K562 (cell line): ENCODE measurements at regions of chr5 and their contacts with region 1.

Region 1: GRCh38 chr5:140647042-140647341 is 438 bp downstream of the NDUFA2 start:
- DNase-seq: no peak
- ATAC-seq: peak; percentile 52
- H3K4me3 ChIP-seq: peak overlapping the region; percentile 96
- H3K27ac ChIP-seq: peak overlapping the region; percentile 95
- H3K4me1 ChIP-seq: peaks cover 4 to 10% of the 10 kb centered on the region in 2 experiments; a peak in 3 of 5 replicates
- H3K27me3 ChIP-seq: no peaks in the 10 kb centered on the region; a peak in 1 of 5 replicates
- CTCF ChIP-seq: no peak
- EP300 ChIP-seq: no peak
- POLR2A ChIP-seq: no peak
- RAD21 ChIP-seq: no peak

Region 2: GRCh38 chr5:140547508-140548299 is 99.3 kb before region 1 on chr5 and contains the start of gene EIF4EBP3:
- CTCF ChIA-PET with region 1: no interaction called
- POLR2A ChIA-PET with region 1: interaction called, 14 read pairs
- in situ Hi-C with region 1: no loop called
- intact Hi-C with region 1: no loop called
- DNase-seq: peak; percentile 86 to 95 (median 90)
- ATAC-seq: peak; percentile 94
- H3K4me3 ChIP-seq: peak within 1 kb of the TSS; percentile 3; the same call in 1 of the 2 replicates
- H3K27ac ChIP-seq: peak within 1 kb of the TSS; percentile 61
- H3K4me1 ChIP-seq: peaks cover 34 to 35% of the 10 kb centered on the region in 2 experiments
- H3K27me3 ChIP-seq: no peaks in the 10 kb centered on the region; a peak in 1 of 5 replicates
- CTCF ChIP-seq: peak; percentile 51 to 72 (median 64)
- EP300 ChIP-seq: no peak
- POLR2A ChIP-seq: peak; percentile 44
- RAD21 ChIP-seq: peak; percentile 43 to 54
- polyA plus RNA-seq, gene EIF4EBP3: 5.0 to 7.5 TPM

Region 3: GRCh38 chr5:140557136-140557805 is 89.7 kb before region 1 on chr5 and contains the start of gene SRA1:
- CTCF ChIA-PET with region 1: no interaction called
- POLR2A ChIA-PET with region 1: interaction called, 20 read pairs
- in situ Hi-C with region 1: no loop called
- intact Hi-C with region 1: no loop called
- DNase-seq: peak; percentile 83 to 95 (median 91)
- ATAC-seq: peak; percentile 94
- H3K4me3 ChIP-seq: peak within 1 kb of the TSS; percentile 77
- H3K27ac ChIP-seq: peak within 1 kb of the TSS; percentile 86
- H3K4me1 ChIP-seq: peaks cover 23 to 27% of the 10 kb centered on the region in 2 experiments
- H3K27me3 ChIP-seq: no peaks in the 10 kb centered on the region
- CTCF ChIP-seq: peak in 1 of 3 experiments; percentile 13; a peak in 1 of 6 replicates
- EP300 ChIP-seq: no peak
- POLR2A ChIP-seq: peak; percentile 96
- RAD21 ChIP-seq: no peak
- polyA plus RNA-seq, gene SRA1: 24.1 to 33.6 TPM

Region 4: GRCh38 chr5:140658870-140659269 is 11.9 kb after region 1 on chr5:
- CTCF ChIA-PET with region 1: no interaction called
- POLR2A ChIA-PET with region 1: interaction called, 25 read pairs
- in situ Hi-C with region 1: no loop called
- intact Hi-C with region 1: loop called (anchors 2 kb)
- DNase-seq: no peak
- ATAC-seq: no peak
- H3K4me3 ChIP-seq: no peak overlapping the region
- H3K27ac ChIP-seq: no peak overlapping the region
- H3K4me1 ChIP-seq: peaks cover 0 to 3% of the 10 kb centered on the region in 2 experiments; a peak in 3 of 5 replicates
- H3K27me3 ChIP-seq: no peaks in the 10 kb centered on the region
- CTCF ChIP-seq: no peak
- EP300 ChIP-seq: no peak
- POLR2A ChIP-seq: no peak
- RAD21 ChIP-seq: no peak

Region 5: DNA sequence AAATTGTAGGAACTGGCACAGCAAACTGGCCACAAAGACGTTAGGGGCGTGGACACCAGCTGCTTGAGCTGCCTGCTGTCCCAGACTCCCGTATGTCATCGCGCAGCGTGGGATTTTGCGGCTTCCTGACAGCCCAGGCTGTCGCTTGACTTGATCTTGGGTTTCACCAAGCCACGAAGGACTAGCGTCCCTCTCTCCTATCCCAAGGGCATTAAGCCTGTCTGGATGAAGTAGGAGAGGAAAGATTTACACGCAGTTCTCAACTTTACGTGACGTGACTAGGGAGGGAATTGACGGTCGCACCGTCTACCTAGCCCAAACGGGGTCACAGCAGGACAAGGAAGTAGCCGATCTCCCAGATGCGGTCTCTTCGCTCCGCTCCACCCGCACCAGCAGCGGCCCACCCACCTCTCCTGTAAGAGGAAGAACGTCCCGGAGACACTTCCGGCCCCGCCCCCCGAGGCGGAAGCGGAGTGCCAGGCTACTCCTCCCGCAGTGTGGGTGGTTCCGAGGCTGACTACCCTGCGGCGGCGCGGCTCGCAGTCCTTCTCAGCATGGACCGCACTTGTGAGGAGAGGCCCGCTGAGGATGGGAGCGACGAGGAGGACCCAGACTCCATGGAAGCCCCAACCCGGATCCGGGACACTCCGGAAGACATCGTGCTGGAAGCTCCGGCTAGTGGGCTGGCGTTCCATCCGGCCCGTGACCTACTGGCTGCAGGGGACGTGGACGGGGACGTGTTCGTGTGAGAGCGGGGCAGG is 17.5 kb after region 1 on chr5 and contains the start of gene WDR55:
- CTCF ChIA-PET with region 1: interaction called, 3 read pairs
- POLR2A ChIA-PET with region 1: interaction called, 25 read pairs
- in situ Hi-C with region 1: no loop called
- intact Hi-C with region 1: loop called (anchors 2 kb)
- DNase-seq: peak; percentile 92 to 98 (median 94)
- ATAC-seq: peak; percentile 98
- H3K4me3 ChIP-seq: peak within 1 kb of the TSS; percentile 92
- H3K27ac ChIP-seq: peak within 1 kb of the TSS; percentile 91
- H3K4me1 ChIP-seq: peaks cover 10 to 14% of the 10 kb centered on the region in 2 experiments; a peak in 4 of 5 replicates
- H3K27me3 ChIP-seq: no peaks in the 10 kb centered on the region
- CTCF ChIP-seq: 0 out of 6 replicates have a peak, but pooled peaks of 1 of the 3 experiments have one; percentile 5
- EP300 ChIP-seq: 0 out of 2 replicates have a peak, but pooled peaks have one; percentile 3
- POLR2A ChIP-seq: peak; percentile 92
- RAD21 ChIP-seq: peak; percentile 6 to 9; a peak in 1 of 4 replicates
- polyA plus RNA-seq, gene WDR55: 5.2 to 6.6 TPM